Panc1 (cell line): ENCODE measurements at regions of chr6 and their contacts with region 1.

Region 1: GRCh38 chr6:26234421-26235296 is 130.3 kb upstream of the BTN3A2 start:
- DNase-seq: no peak
- ATAC-seq: peak; percentile 88
- H3K4me3 ChIP-seq: peak overlapping the region; percentile 78 to 87
- H3K27ac ChIP-seq: peak overlapping the region; percentile 99
- H3K4me1 ChIP-seq: peaks cover 25% of the 10 kb centered on the region
- H3K27me3 ChIP-seq: no peaks in the 10 kb centered on the region
- CTCF ChIP-seq: no peak

Region 2: DNA sequence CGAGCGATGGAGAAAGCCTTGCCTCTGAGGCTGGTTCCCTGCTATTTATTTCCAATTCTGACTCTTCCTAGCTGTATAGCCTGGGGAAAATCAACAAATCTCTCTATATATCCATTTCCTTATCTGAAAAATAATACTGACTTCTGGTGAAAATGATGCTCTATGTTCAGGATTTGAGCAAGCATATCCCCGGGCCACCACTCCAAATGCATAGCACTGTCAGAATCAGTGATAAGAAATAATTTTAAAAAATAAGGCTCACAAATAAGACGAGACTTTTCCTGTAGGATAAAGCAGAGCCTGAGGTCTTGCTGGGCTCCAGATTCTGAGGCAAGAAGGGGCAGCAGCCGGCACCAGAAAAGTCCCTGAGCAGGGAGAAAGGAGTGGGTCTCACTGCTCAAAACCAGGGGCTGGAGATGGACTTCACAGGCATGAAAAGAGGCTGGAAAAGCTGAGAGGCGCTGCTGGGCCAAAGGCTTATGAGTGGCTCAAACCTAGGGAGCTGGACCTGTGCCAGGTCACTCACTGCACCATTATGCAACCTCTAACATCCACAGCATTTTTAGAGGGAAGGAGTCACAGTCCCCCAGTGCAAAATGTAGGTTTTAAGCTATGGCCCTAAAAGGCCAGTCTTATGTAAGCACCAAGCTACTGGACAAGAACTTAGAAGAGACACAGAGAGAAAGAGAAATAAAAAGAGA is 528.2 kb before region 1 on chr6:
- CTCF ChIA-PET with region 1: no interaction called
- POLR2A ChIA-PET with region 1: no interaction called
- in situ Hi-C with region 1: no loop called
- intact Hi-C with region 1: no loop called
- DNase-seq: no peak
- ATAC-seq: no peak
- H3K4me3 ChIP-seq: no peak overlapping the region
- H3K27ac ChIP-seq: no peak overlapping the region
- H3K4me1 ChIP-seq: no peaks in the 10 kb centered on the region
- H3K27me3 ChIP-seq: no peaks in the 10 kb centered on the region
- CTCF ChIP-seq: no peak

Region 3: DNA sequence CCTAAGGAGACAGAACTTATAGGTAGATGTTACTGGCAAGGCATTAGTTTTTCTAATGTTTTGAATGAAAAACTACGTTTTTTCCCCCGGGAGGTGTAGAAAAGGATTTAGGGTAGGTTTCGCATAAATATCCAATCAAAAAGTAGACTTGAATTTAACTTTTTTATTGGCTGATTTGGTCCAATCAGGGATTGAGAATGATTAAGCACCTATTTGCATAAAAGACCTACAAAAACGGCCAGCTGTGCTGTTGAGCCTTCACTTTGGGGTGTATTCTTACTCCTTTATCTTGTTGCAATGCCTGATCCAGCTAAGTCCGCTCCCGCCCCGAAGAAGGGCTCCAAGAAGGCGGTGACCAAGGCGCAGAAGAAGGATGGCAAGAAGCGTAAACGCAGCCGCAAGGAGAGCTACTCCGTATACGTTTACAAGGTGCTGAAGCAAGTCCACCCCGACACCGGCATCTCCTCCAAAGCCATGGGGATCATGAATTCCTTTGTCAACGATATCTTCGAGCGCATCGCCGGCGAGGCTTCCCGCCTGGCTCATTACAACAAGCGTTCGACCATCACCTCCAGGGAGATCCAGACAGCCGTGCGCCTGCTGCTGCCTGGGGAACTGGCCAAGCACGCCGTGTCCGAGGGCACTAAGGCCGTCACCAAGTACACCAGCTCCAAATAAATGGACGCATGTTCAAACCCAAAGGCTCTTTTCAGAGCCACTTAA is 16.9 kb after region 1 on chr6:
- CTCF ChIA-PET with region 1: no interaction called
- POLR2A ChIA-PET with region 1: interaction called, 10 read pairs
- in situ Hi-C with region 1: no loop called
- intact Hi-C with region 1: no loop called
- DNase-seq: no peak
- ATAC-seq: no peak
- H3K4me3 ChIP-seq: peak overlapping the region; percentile 41 to 44
- H3K27ac ChIP-seq: peak overlapping the region; percentile 3; the same call in 1 of the 2 replicates
- H3K4me1 ChIP-seq: peaks cover 3% of the 10 kb centered on the region
- H3K27me3 ChIP-seq: no peaks in the 10 kb centered on the region
- CTCF ChIP-seq: no peak

Region 4: DNA sequence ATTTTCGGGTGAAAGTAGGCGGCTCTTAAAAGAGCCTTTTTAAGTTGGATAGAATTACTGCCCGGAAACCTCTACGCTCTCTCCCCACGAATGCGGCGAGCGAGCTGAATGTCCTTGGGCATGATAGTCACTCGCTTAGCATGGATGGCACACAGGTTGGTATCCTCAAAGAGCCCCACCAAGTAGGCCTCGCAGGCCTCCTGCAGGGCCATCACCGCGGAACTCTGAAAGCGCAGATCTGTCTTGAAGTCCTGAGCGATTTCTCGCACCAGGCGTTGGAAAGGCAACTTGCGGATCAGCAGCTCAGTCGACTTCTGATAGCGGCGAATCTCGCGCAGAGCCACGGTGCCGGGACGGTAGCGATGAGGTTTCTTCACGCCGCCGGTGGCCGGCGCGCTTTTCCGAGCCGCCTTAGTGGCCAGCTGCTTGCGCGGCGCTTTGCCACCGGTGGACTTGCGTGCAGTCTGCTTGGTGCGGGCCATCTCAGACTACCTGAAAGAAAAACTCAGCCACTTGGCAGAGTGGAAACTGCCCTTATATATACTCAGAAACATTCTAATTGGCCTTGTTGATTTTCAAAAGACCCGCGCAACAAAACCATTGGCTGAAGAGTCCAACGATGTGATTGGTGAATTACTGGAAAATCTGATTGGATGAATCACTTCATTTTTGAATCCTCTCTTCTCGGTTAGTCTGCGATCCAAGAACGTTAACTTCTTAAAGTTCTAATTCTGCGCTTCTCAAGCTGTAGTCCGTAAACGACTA is 36.4 kb after region 1 on chr6:
- CTCF ChIA-PET with region 1: interaction called, 3 read pairs
- POLR2A ChIA-PET with region 1: interaction called, 10 read pairs
- in situ Hi-C with region 1: no loop called
- intact Hi-C with region 1: no loop called
- DNase-seq: no peak
- ATAC-seq: no peak
- H3K4me3 ChIP-seq: peak overlapping the region in 1 of 2 experiments; percentile 61; a peak in 1 of 4 replicates
- H3K27ac ChIP-seq: peak overlapping the region; percentile 89
- H3K4me1 ChIP-seq: peaks cover 7% of the 10 kb centered on the region
- H3K27me3 ChIP-seq: no peaks in the 10 kb centered on the region
- CTCF ChIP-seq: no peak

Region 5: GRCh38 chr6:26285143-26286134 is 50.8 kb after region 1 on chr6:
- CTCF ChIA-PET with region 1: no interaction called
- POLR2A ChIA-PET with region 1: interaction called, 12 read pairs
- in situ Hi-C with region 1: no loop called
- intact Hi-C with region 1: no loop called
- DNase-seq: peak; percentile 100
- ATAC-seq: peak; percentile 89
- H3K4me3 ChIP-seq: peak overlapping the region; percentile 66 to 96
- H3K27ac ChIP-seq: peak overlapping the region; percentile 95
- H3K4me1 ChIP-seq: peaks cover 12% of the 10 kb centered on the region; the same call in 1 of the 2 replicates
- H3K27me3 ChIP-seq: no peaks in the 10 kb centered on the region
- CTCF ChIP-seq: no peak